Panc1 (cell line): ENCODE measurements at regions of chr3 and their contacts with region 1.

Region 1: GRCh38 chr3:125068271-125068670 is 12.5 kb upstream of the HEG1 start:
- DNase-seq: no peak
- ATAC-seq: no peak
- H3K4me3 ChIP-seq: no peak overlapping the region
- H3K27ac ChIP-seq: peak overlapping the region; percentile 97; the same call in 1 of the 2 replicates
- H3K4me1 ChIP-seq: peaks cover 10% of the 10 kb centered on the region
- H3K27me3 ChIP-seq: no peaks in the 10 kb centered on the region
- CTCF ChIP-seq: no peak

Region 2: DNA sequence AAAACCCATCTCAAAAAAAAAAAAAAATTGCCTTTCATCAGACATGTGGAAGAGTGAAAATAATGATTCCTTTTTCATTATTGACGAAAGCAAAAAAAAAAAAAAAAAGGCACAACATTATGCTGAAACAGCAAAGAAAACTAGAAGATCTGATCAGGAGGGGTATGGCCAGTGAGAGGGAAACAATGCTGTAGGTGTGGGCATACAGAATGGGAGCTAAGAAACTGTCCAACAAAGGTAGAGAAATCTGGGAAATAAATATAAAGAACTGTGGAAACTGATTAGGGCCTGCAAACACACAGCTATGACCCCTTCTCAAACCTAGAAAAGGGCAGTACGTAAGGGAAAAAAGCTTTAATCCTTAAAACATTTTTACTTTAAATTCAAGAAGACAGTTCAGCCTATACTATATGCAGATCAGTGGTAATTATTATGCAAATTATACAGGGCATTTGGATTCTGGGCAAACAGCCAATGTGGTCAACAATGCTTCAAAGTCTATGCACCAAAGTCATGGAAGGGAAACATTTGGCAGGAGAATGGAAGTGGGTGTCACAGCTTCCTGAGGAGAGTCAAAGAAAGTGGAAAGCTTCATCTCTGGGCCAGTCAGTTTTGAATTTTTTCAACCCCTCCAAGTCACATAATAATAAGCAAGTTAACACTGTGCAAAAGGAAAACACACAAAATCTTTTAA is 212.5 kb after region 1 on chr3:
- CTCF ChIA-PET with region 1: interaction called, 15 read pairs
- POLR2A ChIA-PET with region 1: no interaction called
- in situ Hi-C with region 1: no loop called
- intact Hi-C with region 1: no loop called
- DNase-seq: no peak
- ATAC-seq: no peak
- H3K4me3 ChIP-seq: no peak overlapping the region
- H3K27ac ChIP-seq: no peak overlapping the region
- H3K4me1 ChIP-seq: no peaks in the 10 kb centered on the region
- H3K27me3 ChIP-seq: no peaks in the 10 kb centered on the region
- CTCF ChIP-seq: no peak